GM12878 (cell line): ENCODE measurements at regions of chr16 and their contacts with region 1.

Region 1: GRCh38 chr16:50024684-50025536 is at the start of gene CNEP1R1:
- DNase-seq: peak; percentile 93
- ATAC-seq: peak; percentile 98
- H3K4me3 ChIP-seq: peak within 1 kb of the TSS; percentile 76
- H3K27ac ChIP-seq: peak within 1 kb of the TSS; percentile 64
- H3K4me1 ChIP-seq: 0 out of 2 replicates have a peak, but pooled peaks cover 3% of the 10 kb centered on the region
- H3K27me3 ChIP-seq: no peaks in the 10 kb centered on the region
- CTCF ChIP-seq: peak; percentile 100; a peak in 5 of 6 replicates
- EP300 ChIP-seq: no peak
- POLR2A ChIP-seq: peak; percentile 84
- RAD21 ChIP-seq: peak; percentile 82
- polyA plus RNA-seq, gene CNEP1R1: 11.5 to 15.7 TPM

Region 2: DNA sequence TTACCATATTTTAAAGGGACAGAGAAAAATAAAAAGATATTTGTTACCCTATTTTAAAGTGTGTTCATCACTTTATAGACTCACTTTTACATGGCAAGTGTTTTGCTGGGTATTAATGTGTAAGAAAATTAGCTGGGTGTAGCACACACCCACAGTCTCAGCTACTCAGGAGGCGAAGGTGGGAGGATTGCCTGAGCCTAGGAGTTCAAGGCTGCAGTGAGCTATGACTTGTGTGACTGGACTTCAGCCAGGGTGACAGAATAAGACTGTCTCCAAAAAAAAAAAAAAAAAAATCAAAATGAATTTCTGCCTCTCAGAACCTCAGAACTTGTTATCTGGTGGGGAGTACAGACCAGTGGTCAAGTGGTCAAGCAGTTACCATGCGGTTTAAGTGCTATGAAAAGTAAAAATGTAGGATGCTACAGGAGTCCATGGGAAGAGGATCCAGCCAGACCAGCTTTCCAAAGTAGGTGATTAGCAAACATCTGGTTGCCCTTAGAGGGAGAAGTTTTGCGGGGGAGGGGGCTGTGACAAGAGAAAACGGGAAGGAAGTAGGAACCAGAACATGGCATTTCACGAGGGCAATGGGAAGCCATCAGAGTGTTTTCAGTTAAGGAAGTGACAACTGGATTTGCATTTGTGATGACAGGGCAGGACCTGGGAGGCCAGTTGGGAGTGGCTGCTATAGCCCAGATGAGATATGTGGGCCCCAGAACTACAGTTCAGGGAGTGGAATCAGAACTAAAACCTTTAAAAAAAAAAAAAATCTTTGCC is 14.0 kb after region 1 on chr16:
- CTCF ChIA-PET with region 1: interaction called, 25 read pairs
- POLR2A ChIA-PET with region 1: interaction called, 5 read pairs
- RAD21 ChIA-PET with region 1: interaction called, 11 read pairs
- SMC1A ChIA-PET with region 1: interaction called, 8 read pairs
- in situ Hi-C with region 1: no loop called
- intact Hi-C with region 1: no loop called
- DNase-seq: no peak
- ATAC-seq: peak; percentile 46; the same call in 1 of the 3 replicates
- H3K4me3 ChIP-seq: no peak overlapping the region
- H3K27ac ChIP-seq: no peak overlapping the region
- H3K4me1 ChIP-seq: peaks cover 11% of the 10 kb centered on the region
- H3K27me3 ChIP-seq: no peaks in the 10 kb centered on the region
- CTCF ChIP-seq: no peak
- EP300 ChIP-seq: no peak
- POLR2A ChIP-seq: no peak
- RAD21 ChIP-seq: no peak

Region 3: GRCh38 chr16:50065624-50066481 is 40.9 kb after region 1 on chr16 and contains the start of gene HEATR3:
- CTCF ChIA-PET with region 1: interaction called, 80 read pairs
- POLR2A ChIA-PET with region 1: interaction called, 8 read pairs
- RAD21 ChIA-PET with region 1: interaction called, 66 read pairs
- SMC1A ChIA-PET with region 1: interaction called, 28 read pairs
- in situ Hi-C with region 1: no loop called
- intact Hi-C with region 1: no loop called
- DNase-seq: peak; percentile 82
- ATAC-seq: peak; percentile 93
- H3K4me3 ChIP-seq: peak within 1 kb of the TSS; percentile 99
- H3K27ac ChIP-seq: peak within 1 kb of the TSS; percentile 86
- H3K4me1 ChIP-seq: peaks cover 15% of the 10 kb centered on the region
- H3K27me3 ChIP-seq: no peaks in the 10 kb centered on the region
- CTCF ChIP-seq: no peak
- EP300 ChIP-seq: no peak
- POLR2A ChIP-seq: peak; percentile 89
- RAD21 ChIP-seq: no peak
- polyA plus RNA-seq, gene HEATR3: 1.5 to 5.0 TPM

Region 4: GRCh38 chr16:50152807-50153452 is 128.0 kb after region 1 on chr16 and contains the start of gene TENT4B:
- CTCF ChIA-PET with region 1: interaction called, 16 read pairs
- POLR2A ChIA-PET with region 1: interaction called, 4 read pairs
- RAD21 ChIA-PET with region 1: interaction called, 8 read pairs
- SMC1A ChIA-PET with region 1: interaction called, 12 read pairs
- in situ Hi-C with region 1: no loop called
- intact Hi-C with region 1: loop called (anchors 1 kb)
- DNase-seq: peak; percentile 57
- ATAC-seq: peak; percentile 78
- H3K4me3 ChIP-seq: peak within 1 kb of the TSS; percentile 87
- H3K27ac ChIP-seq: peak within 1 kb of the TSS; percentile 96
- H3K4me1 ChIP-seq: peaks cover 6% of the 10 kb centered on the region
- H3K27me3 ChIP-seq: no peaks in the 10 kb centered on the region
- CTCF ChIP-seq: no peak
- EP300 ChIP-seq: no peak
- POLR2A ChIP-seq: peak; percentile 94
- RAD21 ChIP-seq: no peak
- polyA plus RNA-seq, gene TENT4B: 11.7 to 16.7 TPM

Region 5: GRCh38 chr16:50273681-50274325 is 248.9 kb after region 1 on chr16:
- CTCF ChIA-PET with region 1: interaction called, 11 read pairs
- POLR2A ChIA-PET with region 1: interaction called, 3 read pairs
- RAD21 ChIA-PET with region 1: interaction called, 8 read pairs
- SMC1A ChIA-PET with region 1: interaction called, 4 read pairs
- in situ Hi-C with region 1: no loop called
- intact Hi-C with region 1: no loop called
- DNase-seq: peak; percentile 64
- ATAC-seq: peak; percentile 80
- H3K4me3 ChIP-seq: peak overlapping the region; percentile 70
- H3K27ac ChIP-seq: peak overlapping the region; percentile 93
- H3K4me1 ChIP-seq: peaks cover 49% of the 10 kb centered on the region
- H3K27me3 ChIP-seq: no peaks in the 10 kb centered on the region
- CTCF ChIP-seq: no peak
- EP300 ChIP-seq: peak in 1 of 2 experiments; percentile 47; a peak in 2 of 4 replicates
- POLR2A ChIP-seq: peak; percentile 59
- RAD21 ChIP-seq: no peak

Region 6: DNA sequence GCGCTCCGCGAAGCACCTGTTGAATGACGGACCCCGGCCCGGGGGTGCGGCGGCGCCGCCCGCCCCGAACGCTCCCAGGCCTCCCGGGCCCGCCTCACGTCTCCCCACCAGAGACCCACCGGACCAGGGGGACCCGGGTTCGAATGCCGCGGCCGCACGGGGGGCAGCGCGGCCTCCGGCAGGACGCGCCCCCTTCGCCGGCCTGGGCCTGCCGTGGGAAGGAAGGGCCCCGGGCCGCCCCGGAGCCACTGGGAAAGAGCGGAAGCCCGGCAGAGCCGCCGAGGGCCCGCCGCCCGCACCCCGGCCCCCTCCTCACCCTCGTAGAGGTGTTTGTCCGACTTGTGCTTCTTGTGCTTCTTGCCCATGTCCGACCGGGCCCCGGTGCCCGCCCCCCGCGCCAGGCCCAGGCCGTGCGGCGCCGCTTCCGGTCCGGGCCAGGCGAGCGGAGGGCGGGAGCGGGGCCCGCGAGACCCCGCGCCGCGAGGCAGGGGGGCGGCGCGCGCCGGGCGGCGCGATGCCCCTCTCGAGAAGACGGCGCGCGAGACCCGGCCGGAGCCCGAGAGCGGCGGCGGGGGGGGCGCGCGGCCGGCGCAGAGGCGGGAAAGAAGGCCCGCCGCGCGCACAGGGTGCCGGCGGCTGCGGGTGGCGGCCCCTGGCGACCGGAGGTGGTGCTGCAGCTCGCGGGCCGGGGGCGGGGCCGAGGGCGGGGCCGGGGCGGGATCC is 343.7 kb after region 1 on chr16 and contains the start of gene BRD7:
- CTCF ChIA-PET with region 1: interaction called, 8 read pairs
- POLR2A ChIA-PET with region 1: no interaction called
- RAD21 ChIA-PET with region 1: interaction called, 8 read pairs
- SMC1A ChIA-PET with region 1: interaction called, 7 read pairs
- in situ Hi-C with region 1: no loop called
- intact Hi-C with region 1: loop called (anchors 10 kb)
- DNase-seq: no peak
- ATAC-seq: peak; percentile 82
- H3K4me3 ChIP-seq: peak within 1 kb of the TSS; percentile 91
- H3K27ac ChIP-seq: peak within 1 kb of the TSS; percentile 54
- H3K4me1 ChIP-seq: no peaks in the 10 kb centered on the region; the same call in 1 of the 2 replicates
- H3K27me3 ChIP-seq: no peaks in the 10 kb centered on the region
- CTCF ChIP-seq: peak in 2 of 3 experiments; percentile 42 to 52; a peak in 3 of 6 replicates
- EP300 ChIP-seq: no peak
- POLR2A ChIP-seq: peak; percentile 49; the same call in 1 of the 2 replicates
- RAD21 ChIP-seq: no peak; the same call in 1 of the 2 replicates
- polyA plus RNA-seq, gene BRD7: 16.9 to 36.5 TPM